ENCODE measurements at regions of chr2 and their contacts with region 1.

Region 1: DNA sequence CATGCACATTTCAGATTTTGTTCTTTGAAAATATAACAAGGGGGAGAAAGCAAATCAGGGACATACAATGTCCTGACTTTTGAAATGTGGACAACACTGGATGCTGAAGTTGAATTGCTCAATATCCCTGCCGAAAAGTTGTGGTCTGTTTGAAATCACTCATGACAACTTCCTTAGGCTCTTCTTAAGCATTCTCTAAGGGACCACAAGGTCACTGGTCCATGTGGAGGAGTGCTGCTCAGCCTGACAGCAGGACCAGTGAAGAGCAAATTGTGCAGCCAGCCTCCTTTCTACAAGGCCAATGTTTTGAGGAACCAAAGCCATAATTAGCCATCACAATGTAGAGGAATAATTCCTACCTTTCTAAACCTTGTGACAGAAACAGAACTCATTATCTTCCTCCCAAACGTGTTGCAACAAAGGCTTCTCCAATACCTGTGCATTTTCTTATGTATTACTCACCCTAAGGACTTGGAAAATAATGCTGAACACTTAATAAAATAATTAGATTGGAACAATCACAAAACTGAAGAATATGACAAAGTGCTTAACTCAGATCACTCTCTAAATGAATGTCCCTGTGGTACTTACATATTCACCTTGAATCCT is 1477.6 kb upstream of the NXPH2 start:
- DNase-seq: no peak
- H3K4me3 ChIP-seq: no peak overlapping the region
- H3K27ac ChIP-seq: no peak overlapping the region
- H3K4me1 ChIP-seq: no peaks in the 10 kb centered on the region
- H3K27me3 ChIP-seq: no peaks in the 10 kb centered on the region
- CTCF ChIP-seq: no peak
- EP300 ChIP-seq: no peak
- POLR2A ChIP-seq: no peak

Region 2: GRCh38 chr2:139465789-139466188 is 792.0 kb before region 1 on chr2:
- in situ Hi-C with region 1: no loop called
- intact Hi-C with region 1: loop called (anchors 5 kb)
- DNase-seq: no peak
- H3K4me3 ChIP-seq: no peak overlapping the region
- H3K27ac ChIP-seq: no peak overlapping the region
- H3K4me1 ChIP-seq: no peaks in the 10 kb centered on the region
- H3K27me3 ChIP-seq: no peaks in the 10 kb centered on the region
- CTCF ChIP-seq: no peak
- EP300 ChIP-seq: no peak
- POLR2A ChIP-seq: no peak

Region 3: DNA sequence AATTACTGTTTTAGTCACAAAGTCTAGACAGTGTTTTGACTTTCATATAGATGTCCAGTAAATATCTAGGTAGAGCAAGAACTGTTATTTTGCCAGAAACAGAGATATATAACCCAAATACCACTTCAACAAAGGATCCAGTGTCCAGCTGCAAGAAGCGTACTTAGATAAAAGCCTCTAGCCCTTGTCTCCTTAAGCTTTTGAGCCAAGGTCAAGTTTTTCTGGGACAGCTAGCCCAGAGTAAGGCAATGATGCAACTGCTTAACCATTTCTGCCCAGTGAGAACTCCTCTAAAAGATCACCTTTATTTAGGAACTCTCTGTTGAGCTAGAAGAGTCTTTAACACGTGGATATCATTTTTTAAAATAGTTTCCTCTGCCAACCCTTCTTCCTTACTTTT is 52.7 kb before region 1 on chr2:
- in situ Hi-C with region 1: no loop called
- intact Hi-C with region 1: no loop called
- DNase-seq: no peak
- H3K4me3 ChIP-seq: no peak overlapping the region
- H3K27ac ChIP-seq: no peak overlapping the region
- H3K4me1 ChIP-seq: no peaks in the 10 kb centered on the region
- H3K27me3 ChIP-seq: no peaks in the 10 kb centered on the region
- CTCF ChIP-seq: no peak
- EP300 ChIP-seq: no peak
- POLR2A ChIP-seq: no peak

Measured in transverse colon (tissue), 4 donors.